Panc1 (cell line): ENCODE measurements at regions of chr9 and their contacts with region 1.

Region 1: GRCh38 chr9:29928072-29928471 is 2354.8 kb upstream of the C9orf72 start:
- DNase-seq: no peak
- ATAC-seq: no peak
- H3K4me3 ChIP-seq: no peak overlapping the region
- H3K27ac ChIP-seq: no peak overlapping the region
- H3K4me1 ChIP-seq: no peaks in the 10 kb centered on the region
- H3K27me3 ChIP-seq: no peaks in the 10 kb centered on the region
- CTCF ChIP-seq: no peak

Region 2: GRCh38 chr9:29945012-29945411 is 16.9 kb after region 1 on chr9:
- CTCF ChIA-PET with region 1: no interaction called
- POLR2A ChIA-PET with region 1: no interaction called
- in situ Hi-C with region 1: no loop called
- intact Hi-C with region 1: loop called (anchors 2 kb)
- DNase-seq: no peak
- ATAC-seq: no peak
- H3K4me3 ChIP-seq: no peak overlapping the region
- H3K27ac ChIP-seq: no peak overlapping the region
- H3K4me1 ChIP-seq: no peaks in the 10 kb centered on the region
- H3K27me3 ChIP-seq: no peaks in the 10 kb centered on the region
- CTCF ChIP-seq: no peak